ENCODE measurements at regions of chr18 and their contacts with region 1.

Region 1: GRCh38 chr18:22098563-22098989 is 70.8 kb upstream of the GATA6 start:
- DNase-seq: no peak
- H3K4me3 ChIP-seq: no peak overlapping the region
- H3K27ac ChIP-seq: no peak overlapping the region
- H3K4me1 ChIP-seq: peaks cover 0 to 2% (median 0%) of the 10 kb centered on the region in 4 experiments; a peak in 2 of 7 replicates
- H3K27me3 ChIP-seq: no peaks in the 10 kb centered on the region
- CTCF ChIP-seq: no peak
- EP300 ChIP-seq: no peak
- POLR2A ChIP-seq: no peak
- RAD21 ChIP-seq: no peak

Region 2: DNA sequence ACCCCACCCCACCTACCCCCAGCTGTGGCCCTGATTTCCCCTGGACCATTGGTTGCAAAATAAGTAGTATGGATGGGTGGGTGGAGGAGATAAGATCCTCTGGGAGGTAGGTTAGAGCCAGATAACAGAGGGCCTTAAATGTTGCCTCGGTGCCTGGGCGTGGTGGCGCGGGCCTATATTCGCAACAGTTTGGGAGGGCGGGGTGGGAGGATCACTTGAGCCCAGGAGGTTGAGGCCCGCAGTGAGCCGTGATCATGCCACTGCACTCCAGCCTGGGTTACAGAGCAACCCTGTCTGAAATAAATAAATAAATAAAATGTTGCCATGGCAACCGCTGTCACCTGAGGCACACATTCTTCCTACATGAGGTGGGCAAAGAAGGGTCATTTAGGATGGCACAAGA is 32.5 kb before region 1 on chr18:
- CTCF ChIA-PET with region 1: no interaction called
- POLR2A ChIA-PET with region 1: no interaction called
- DNase-seq: no peak
- H3K4me3 ChIP-seq: no peak overlapping the region
- H3K27ac ChIP-seq: no peak overlapping the region
- H3K4me1 ChIP-seq: no peaks in the 10 kb centered on the region
- H3K27me3 ChIP-seq: no peaks in the 10 kb centered on the region
- CTCF ChIP-seq: no peak
- EP300 ChIP-seq: no peak
- POLR2A ChIP-seq: no peak
- RAD21 ChIP-seq: no peak

Region 3: DNA sequence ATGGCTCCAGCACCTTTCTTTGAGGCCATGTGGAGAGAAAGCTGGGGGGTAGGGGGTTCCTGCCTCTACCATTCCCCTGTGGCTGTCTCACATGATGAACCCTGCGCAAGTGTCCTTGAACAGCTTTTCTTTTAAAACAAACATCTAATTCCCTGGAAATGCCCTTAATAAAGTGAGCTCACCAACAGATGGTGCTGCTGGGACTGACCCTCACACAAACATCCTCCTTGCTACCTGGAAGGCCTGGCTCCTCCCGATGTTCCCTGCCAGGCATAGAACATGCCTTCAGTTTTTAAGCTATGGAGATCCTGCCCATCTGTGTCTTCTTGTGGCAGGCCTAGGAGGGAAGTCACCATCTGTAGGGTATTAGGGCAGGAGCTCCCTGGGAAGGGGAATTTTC is 10.1 kb after region 1 on chr18:
- CTCF ChIA-PET with region 1: interaction called, 17 read pairs
- POLR2A ChIA-PET with region 1: no interaction called
- DNase-seq: no peak
- H3K4me3 ChIP-seq: no peak overlapping the region
- H3K27ac ChIP-seq: no peak overlapping the region
- H3K4me1 ChIP-seq: peaks cover 0 to 3% (median 1%) of the 10 kb centered on the region in 4 experiments; a peak in 2 of 7 replicates
- H3K27me3 ChIP-seq: no peaks in the 10 kb centered on the region
- CTCF ChIP-seq: peak; percentile 18 to 53 (median 28); a peak in 3 of 4 replicates
- EP300 ChIP-seq: no peak
- POLR2A ChIP-seq: no peak
- RAD21 ChIP-seq: peak; percentile 37 to 52; a peak in 3 of 4 replicates